AG04450 (cell line): ENCODE measurements at regions of chr2 and their contacts with region 1.

Region 1: GRCh38 chr2:200811336-200812121 is at the start of gene BZW1:
- DNase-seq: peak; percentile 93
- H3K4me3 ChIP-seq: peak within 1 kb of the TSS; percentile 92
- H3K27ac ChIP-seq: peak within 1 kb of the TSS; percentile 99
- H3K27me3 ChIP-seq: no peaks in the 10 kb centered on the region
- CTCF ChIP-seq: no peak
- polyA plus RNA-seq, gene BZW1: 359 and 376 TPM in 2 replicates

Region 2: GRCh38 chr2:200765139-200765951 is 46.2 kb before region 1 on chr2:
- CTCF ChIA-PET with region 1: no interaction called
- POLR2A ChIA-PET with region 1: interaction called, 13 read pairs
- DNase-seq: peak; percentile 81
- H3K4me3 ChIP-seq: peak overlapping the region; percentile 7; the same call in 1 of the 2 replicates
- H3K27ac ChIP-seq: peak overlapping the region; percentile 90
- H3K27me3 ChIP-seq: no peaks in the 10 kb centered on the region
- CTCF ChIP-seq: no peak